ENCODE measurements at regions of chr1 and their contacts with region 1.

Region 1: GRCh38 chr1:23777979-23778814 is at the start of gene PITHD1:
- DNase-seq: peak; percentile 97
- H3K4me3 ChIP-seq: peak within 1 kb of the TSS; percentile 72 to 86
- H3K27ac ChIP-seq: peak within 1 kb of the TSS; percentile 81 to 90
- H3K4me1 ChIP-seq: peaks cover 12 to 21% of the 10 kb centered on the region in 2 experiments; a peak in 3 of 4 replicates
- H3K27me3 ChIP-seq: no peaks in the 10 kb centered on the region
- CTCF ChIP-seq: no peak
- EP300 ChIP-seq: no peak
- RAD21 ChIP-seq: no peak
- polyA plus RNA-seq, gene PITHD1: 36.3 and 41.8 TPM in 2 replicates

Region 2: GRCh38 chr1:23800400-23801337 is 22.5 kb after region 1 on chr1 and contains the start of gene GALE:
- CTCF ChIA-PET with region 1: interaction called, 4 read pairs
- POLR2A ChIA-PET with region 1: interaction called, 24 read pairs
- DNase-seq: peak; percentile 99
- H3K4me3 ChIP-seq: peak within 1 kb of the TSS; percentile 71 to 89
- H3K27ac ChIP-seq: peak within 1 kb of the TSS; percentile 73 to 89
- H3K4me1 ChIP-seq: peaks cover 5 to 30% of the 10 kb centered on the region in 2 experiments; a peak in 1 of 4 replicates
- H3K27me3 ChIP-seq: no peaks in the 10 kb centered on the region
- CTCF ChIP-seq: no peak
- EP300 ChIP-seq: 0 out of 4 replicates have a peak, but pooled peaks of 1 of the 2 experiments have one; percentile 9
- RAD21 ChIP-seq: no peak
- polyA plus RNA-seq, gene GALE: 71.7 and 76.0 TPM in 2 replicates

Measured in SK-N-SH (cell line).